Posterior cingulate gyrus (tissue), 11 donors: ENCODE measurements at regions of chr19 and their contacts with region 1.

Region 1: DNA sequence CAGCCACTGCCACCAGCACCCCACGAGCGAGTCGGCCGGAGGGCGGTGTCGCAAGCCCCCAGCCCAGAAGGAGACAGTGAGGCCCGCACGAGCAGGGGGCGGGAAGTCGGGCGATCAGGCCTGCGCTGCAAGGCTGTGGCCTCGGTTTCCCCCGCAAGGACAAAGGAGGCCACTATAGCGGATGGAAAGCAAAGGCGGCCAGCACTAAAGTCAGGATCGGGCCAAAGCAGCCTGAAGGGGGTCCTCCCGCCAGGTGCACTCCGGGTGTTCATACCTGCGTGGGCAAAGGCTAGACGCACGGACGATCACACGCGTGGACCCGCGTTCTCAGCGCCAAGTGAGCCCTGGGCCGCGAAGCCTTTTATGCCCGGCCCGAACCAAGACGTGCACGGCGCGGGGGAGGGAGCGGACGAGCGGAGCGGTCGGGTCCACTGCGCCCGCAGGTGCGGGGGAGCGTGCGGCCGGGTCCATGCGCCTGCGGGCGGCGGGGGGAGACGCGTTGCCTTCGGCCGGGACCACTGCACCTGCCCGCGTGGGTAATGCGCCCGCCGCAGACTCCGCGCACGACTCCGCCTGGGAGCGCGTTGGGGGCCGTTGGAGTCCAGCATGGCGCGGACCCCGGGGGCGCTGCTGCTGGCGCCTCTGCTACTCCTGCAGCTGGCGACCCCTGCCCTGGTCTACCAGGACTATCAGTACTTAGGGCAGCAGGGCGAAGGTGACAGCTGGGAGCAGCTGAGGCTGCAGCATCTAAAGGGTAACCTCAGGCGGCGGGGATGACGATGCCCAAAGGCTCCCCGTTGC is at the starts of genes PRDX2 and THSD8:
- DNase-seq: peak; percentile 75 to 98 (median 86)

Region 2: DNA sequence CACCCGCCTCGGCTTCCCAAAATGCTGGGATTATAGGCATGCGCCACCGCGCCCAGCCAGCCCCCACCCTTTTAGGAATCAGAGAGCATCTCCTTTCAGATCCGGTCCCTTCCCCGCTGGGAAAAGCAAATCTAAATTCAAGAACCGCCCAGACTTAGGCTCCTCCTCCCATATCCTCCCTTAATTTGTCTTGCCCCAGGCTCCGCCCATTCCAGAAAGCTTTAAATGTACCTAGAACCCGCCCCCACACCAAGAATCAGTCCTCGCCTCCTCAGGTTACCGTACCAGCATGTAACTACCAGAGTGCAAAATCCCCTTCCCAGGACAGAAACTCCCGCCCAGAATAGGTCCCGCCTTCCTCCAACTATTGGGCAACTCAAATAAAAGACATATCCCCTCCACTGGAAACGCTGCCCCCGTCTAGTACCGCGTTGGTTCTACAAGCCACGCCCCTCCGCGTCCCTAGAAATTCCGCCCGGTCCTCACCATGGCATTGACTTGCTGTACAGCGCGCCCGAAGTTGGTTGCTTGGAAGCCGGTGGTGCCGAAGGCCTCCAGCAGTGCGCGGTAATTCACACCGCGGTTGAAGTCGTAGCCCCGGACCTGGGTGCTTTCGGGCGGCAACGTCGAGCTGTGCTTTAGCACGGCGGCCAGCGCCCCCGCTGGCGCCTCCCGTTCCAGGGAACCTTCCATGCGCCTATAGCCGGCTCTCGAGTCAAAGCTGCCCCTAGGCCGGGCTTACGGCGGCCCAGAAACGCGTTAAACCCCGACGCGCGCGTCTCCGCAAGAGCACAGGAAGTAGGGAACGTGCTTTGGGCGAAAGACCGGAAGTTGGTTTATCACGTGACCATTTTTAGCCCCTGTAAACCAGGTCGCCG is 120.4 kb before region 1 on chr19 and contains the start of gene DHPS:
- intact Hi-C with region 1: no loop called
- DNase-seq: peak; percentile 80 to 98 (median 88)

Region 3: GRCh38 chr19:12763100-12763499 is 38.6 kb before region 1 on chr19:
- intact Hi-C with region 1: loop called (anchors 5 kb)
- DNase-seq: no peak